Prostate gland (tissue), 2 donors: ENCODE measurements at regions of chr15 and their contacts with region 1.

Region 1: GRCh38 chr15:99076552-99077308 is 28.1 kb upstream of the SYNM start:
- DNase-seq: peak; percentile 67
- H3K4me3 ChIP-seq: peak overlapping the region; percentile 7 to 18
- H3K27ac ChIP-seq: peak overlapping the region in 1 of 2 donors; percentile 27
- H3K4me1 ChIP-seq: no peaks in the 10 kb centered on the region
- H3K27me3 ChIP-seq: no peaks in the 10 kb centered on the region
- CTCF ChIP-seq: peak in 3 of 4 experiments; percentile 83 to 95 (median 90)
- POLR2A ChIP-seq: no peak

Region 2: DNA sequence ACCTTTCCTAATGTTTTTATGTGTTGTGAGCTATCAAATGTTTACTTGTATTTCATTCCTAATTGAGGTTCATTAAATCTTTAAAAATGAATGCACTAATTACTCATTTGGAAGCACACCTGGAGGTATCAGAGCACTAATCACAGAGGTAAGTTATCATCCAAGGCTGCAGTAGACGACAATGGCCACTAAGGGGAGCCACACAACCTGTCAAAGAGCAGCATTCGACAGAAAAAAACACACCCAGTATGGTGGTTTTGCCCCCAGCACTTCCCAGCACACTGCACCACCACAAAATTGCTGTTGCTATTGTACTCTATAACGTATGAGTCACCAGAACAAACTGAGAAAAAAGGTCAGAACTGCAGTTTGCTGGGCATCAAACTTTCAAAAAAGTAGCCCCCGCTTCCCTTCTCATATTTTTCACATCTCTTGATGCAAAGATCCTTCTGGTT is 634.3 kb before region 1 on chr15:
- intact Hi-C with region 1: loop called (anchors 10 kb)
- DNase-seq: peak; percentile 74
- H3K4me3 ChIP-seq: no peak overlapping the region
- H3K27ac ChIP-seq: peak overlapping the region in 1 of 2 donors; percentile 41
- H3K4me1 ChIP-seq: peaks cover 6% of the 10 kb centered on the region
- H3K27me3 ChIP-seq: no peaks in the 10 kb centered on the region
- CTCF ChIP-seq: peak in 3 of 4 experiments; percentile 75 to 90 (median 76)
- POLR2A ChIP-seq: no peak

Region 3: GRCh38 chr15:98518823-98519561 is 557.7 kb before region 1 on chr15:
- intact Hi-C with region 1: loop called (anchors 5 kb)
- DNase-seq: peak; percentile 65
- H3K4me3 ChIP-seq: no peak overlapping the region
- H3K27ac ChIP-seq: no peak overlapping the region
- H3K4me1 ChIP-seq: no peaks in the 10 kb centered on the region
- H3K27me3 ChIP-seq: no peaks in the 10 kb centered on the region
- CTCF ChIP-seq: peak; percentile 36 to 82 (median 80)
- POLR2A ChIP-seq: no peak

Region 4: GRCh38 chr15:98560338-98560737 is 516.4 kb before region 1 on chr15:
- intact Hi-C with region 1: no loop called
- DNase-seq: no peak
- H3K4me3 ChIP-seq: no peak overlapping the region
- H3K27ac ChIP-seq: no peak overlapping the region
- H3K4me1 ChIP-seq: no peaks in the 10 kb centered on the region
- H3K27me3 ChIP-seq: no peaks in the 10 kb centered on the region
- CTCF ChIP-seq: no peak
- POLR2A ChIP-seq: no peak

Region 5: DNA sequence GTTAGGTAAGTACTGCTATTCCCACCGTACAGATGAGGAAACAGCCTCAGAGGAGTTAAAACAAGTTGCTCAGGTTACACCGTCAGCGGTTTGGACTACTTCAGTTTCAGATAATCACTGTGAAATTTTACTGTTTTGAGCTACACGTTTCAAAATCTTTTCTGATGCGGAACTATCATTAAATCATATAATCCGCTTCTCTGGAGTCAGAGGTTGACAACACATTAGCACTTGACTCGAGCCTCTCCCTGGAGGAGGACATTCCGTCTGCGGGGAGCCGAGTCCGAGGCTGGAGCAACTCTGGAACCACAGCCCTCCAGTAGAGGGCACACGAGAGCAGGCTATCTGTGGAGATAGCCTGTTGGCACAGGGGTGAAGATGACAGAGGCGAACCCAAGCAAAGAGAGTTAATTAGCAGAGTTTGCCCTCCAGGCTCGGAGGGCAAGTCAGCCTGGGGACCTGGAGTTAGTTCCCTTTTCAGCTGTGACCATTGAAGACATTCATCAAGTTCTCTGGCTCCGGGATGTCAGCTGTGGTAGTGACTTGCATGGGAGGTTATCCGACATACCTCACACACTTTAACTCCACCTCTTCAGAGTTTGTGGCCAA is 297.2 kb before region 1 on chr15:
- intact Hi-C with region 1: loop called (anchors 5 kb)
- DNase-seq: peak; percentile 60
- H3K4me3 ChIP-seq: no peak overlapping the region
- H3K27ac ChIP-seq: peak overlapping the region; percentile 40 to 65
- H3K4me1 ChIP-seq: peaks cover 24% of the 10 kb centered on the region
- H3K27me3 ChIP-seq: no peaks in the 10 kb centered on the region
- CTCF ChIP-seq: peak; percentile 62 to 90 (median 76)
- POLR2A ChIP-seq: no peak

Region 6: GRCh38 chr15:98927022-98927421 is 149.7 kb before region 1 on chr15:
- intact Hi-C with region 1: no loop called
- DNase-seq: no peak
- H3K4me3 ChIP-seq: no peak overlapping the region
- H3K27ac ChIP-seq: peak overlapping the region; percentile 50 to 53
- H3K4me1 ChIP-seq: peaks cover 6% of the 10 kb centered on the region
- H3K27me3 ChIP-seq: no peaks in the 10 kb centered on the region
- CTCF ChIP-seq: no peak
- POLR2A ChIP-seq: no peak

Region 7: GRCh38 chr15:99143655-99144610 is 67.2 kb after region 1 on chr15:
- intact Hi-C with region 1: no loop called
- DNase-seq: peak; percentile 62
- H3K4me3 ChIP-seq: no peak overlapping the region
- H3K27ac ChIP-seq: peak overlapping the region; percentile 60 to 64
- H3K4me1 ChIP-seq: peaks cover 4% of the 10 kb centered on the region
- H3K27me3 ChIP-seq: no peaks in the 10 kb centered on the region
- CTCF ChIP-seq: no peak
- POLR2A ChIP-seq: no peak